Mammary epithelial cell (primary cell): ENCODE measurements at regions of chr6 and their contacts with region 1.

Region 1: DNA sequence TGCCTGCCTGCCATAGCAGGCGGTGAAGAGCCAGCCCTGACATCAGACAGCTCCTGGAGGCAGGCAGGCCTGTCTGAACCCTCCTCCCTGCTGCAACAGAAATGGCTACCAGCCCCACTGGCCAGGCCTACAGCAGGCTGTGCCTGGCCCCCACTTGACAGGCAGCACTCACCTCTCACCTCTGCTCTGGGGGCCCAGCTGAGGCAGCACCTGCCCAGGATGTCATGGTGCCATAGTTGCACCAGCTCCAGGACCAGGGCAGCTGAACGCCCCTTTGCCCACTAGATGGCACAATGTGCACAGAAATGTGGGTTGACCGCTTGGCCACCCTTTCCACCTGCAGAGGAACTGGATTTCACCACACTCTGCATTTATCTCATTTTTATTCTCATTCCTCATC is 30.6 kb downstream of the MRPL14 start:
- DNase-seq: peak; percentile 61
- H3K4me3 ChIP-seq: no peak overlapping the region
- H3K27ac ChIP-seq: no peak overlapping the region
- H3K4me1 ChIP-seq: no peaks in the 10 kb centered on the region
- H3K27me3 ChIP-seq: no peaks in the 10 kb centered on the region
- CTCF ChIP-seq: peak; percentile 85 to 87

Region 2: GRCh38 chr6:43916924-43917877 is 179.4 kb before region 1 on chr6:
- CTCF ChIA-PET with region 1: no interaction called
- dilution Hi-C with region 1: no loop called
- in situ Hi-C with region 1: no loop called
- intact Hi-C with region 1: no loop called
- DNase-seq: no peak
- H3K4me3 ChIP-seq: no peak overlapping the region
- H3K27ac ChIP-seq: no peak overlapping the region
- H3K4me1 ChIP-seq: no peaks in the 10 kb centered on the region
- H3K27me3 ChIP-seq: no peaks in the 10 kb centered on the region
- CTCF ChIP-seq: no peak

Region 3: DNA sequence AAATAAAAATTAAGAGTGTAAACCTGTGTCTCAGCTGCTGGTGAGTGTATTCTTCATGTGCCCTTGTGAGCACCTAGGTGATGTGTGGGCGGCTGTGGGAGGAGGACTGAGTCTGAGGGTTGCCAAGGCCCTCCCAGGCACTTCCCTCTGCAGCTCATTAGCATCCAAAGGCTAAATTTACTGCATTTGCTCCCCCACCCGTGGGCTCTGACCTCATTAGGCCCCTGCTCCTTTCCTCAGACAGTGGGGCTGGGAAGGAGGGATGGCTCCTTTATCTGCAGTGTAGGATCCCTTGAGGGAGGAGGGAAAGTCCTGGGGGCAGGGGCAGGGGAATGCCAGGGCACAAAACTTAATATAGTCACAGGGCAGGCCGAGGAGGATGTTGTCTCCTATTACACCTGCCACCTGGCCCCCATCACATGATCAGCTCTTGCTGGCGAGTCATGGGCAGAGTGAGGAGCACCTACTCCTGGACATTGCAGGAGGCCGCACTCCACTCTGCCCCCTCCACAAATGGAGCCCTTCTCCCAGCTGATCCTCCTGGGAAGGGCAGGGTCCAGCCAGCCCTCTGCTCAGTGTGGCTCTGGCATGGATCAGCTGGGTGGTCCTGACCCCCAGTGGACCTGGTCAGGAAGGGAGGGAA is 102.6 kb before region 1 on chr6:
- CTCF ChIA-PET with region 1: interaction called, 14 read pairs
- dilution Hi-C with region 1: no loop called
- in situ Hi-C with region 1: no loop called
- intact Hi-C with region 1: no loop called
- DNase-seq: no peak
- H3K4me3 ChIP-seq: no peak overlapping the region
- H3K27ac ChIP-seq: no peak overlapping the region
- H3K4me1 ChIP-seq: peaks cover 16% of the 10 kb centered on the region
- H3K27me3 ChIP-seq: no peaks in the 10 kb centered on the region
- CTCF ChIP-seq: no peak

Region 4: GRCh38 chr6:44127186-44128019 is 30.8 kb after region 1 on chr6 and contains the starts of genes MRPL14 and TMEM63B:
- CTCF ChIA-PET with region 1: no interaction called
- dilution Hi-C with region 1: no loop called
- in situ Hi-C with region 1: no loop called
- intact Hi-C with region 1: loop called (anchors 1 kb)
- DNase-seq: peak; percentile 84
- H3K4me3 ChIP-seq: peak within 1 kb of the TSS; percentile 81 to 89 (median 88)
- H3K27ac ChIP-seq: peak within 1 kb of the TSS; percentile 63
- H3K4me1 ChIP-seq: peaks cover 37% of the 10 kb centered on the region
- H3K27me3 ChIP-seq: no peaks in the 10 kb centered on the region
- CTCF ChIP-seq: no peak
- total RNA-seq, gene MRPL14: 57.2 to 82.0 TPM
- total RNA-seq, gene TMEM63B: 121 to 182 TPM

Region 5: DNA sequence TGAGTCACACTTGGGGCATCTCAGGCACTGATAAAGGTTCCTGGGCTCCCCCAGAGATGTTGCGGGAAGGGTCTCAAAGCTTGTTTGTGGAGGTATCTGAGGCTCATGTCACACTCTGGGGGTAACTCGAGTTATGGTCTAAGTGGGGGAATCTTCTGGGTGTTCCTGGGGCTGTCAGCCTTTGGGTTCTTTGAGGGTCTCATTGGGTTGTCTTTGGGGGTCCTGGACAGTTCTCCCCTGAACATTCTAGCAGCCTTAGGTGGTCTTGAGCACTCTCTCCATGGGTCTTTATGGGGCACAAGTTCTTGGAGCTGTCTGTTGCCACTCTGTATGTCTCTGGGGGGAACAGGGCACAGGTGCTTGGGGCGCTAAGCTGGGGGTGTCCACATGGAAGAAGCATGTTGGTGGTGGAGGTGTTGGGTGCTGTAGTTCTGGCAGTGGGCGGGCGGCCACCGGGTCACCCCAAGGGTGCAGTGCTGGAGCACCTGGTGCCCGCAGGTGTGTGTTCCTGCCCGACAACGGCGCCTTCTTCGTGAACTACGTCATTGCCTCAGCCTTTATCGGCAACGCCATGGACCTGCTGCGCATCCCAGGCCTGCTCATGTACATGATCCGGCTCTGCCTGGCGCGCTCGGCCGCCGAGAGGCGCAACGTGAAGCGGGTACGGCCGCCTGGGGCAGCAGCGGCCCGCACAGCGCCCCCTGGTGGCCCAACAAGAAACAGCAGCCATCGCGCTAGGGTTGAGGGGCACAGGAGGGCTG is 54.9 kb after region 1 on chr6:
- CTCF ChIA-PET with region 1: no interaction called
- dilution Hi-C with region 1: loop called (anchors 5 kb)
- in situ Hi-C with region 1: loop called (anchors 10 kb)
- intact Hi-C with region 1: loop called (anchors 1 kb)
- DNase-seq: peak; percentile 48
- H3K4me3 ChIP-seq: no peak overlapping the region
- H3K27ac ChIP-seq: no peak overlapping the region
- H3K4me1 ChIP-seq: no peaks in the 10 kb centered on the region
- H3K27me3 ChIP-seq: no peaks in the 10 kb centered on the region
- CTCF ChIP-seq: peak; percentile 94 to 99

Region 6: GRCh38 chr6:44246663-44247337 is 150.2 kb after region 1 on chr6 and contains the start of gene HSP90AB1:
- CTCF ChIA-PET with region 1: no interaction called
- dilution Hi-C with region 1: no loop called
- in situ Hi-C with region 1: loop called in 1 of 2 experiments (anchors 25 kb)
- intact Hi-C with region 1: no loop called
- DNase-seq: peak; percentile 98
- H3K4me3 ChIP-seq: peak within 1 kb of the TSS; percentile 75 to 89 (median 81)
- H3K27ac ChIP-seq: peak within 1 kb of the TSS; percentile 93
- H3K4me1 ChIP-seq: peaks cover 37% of the 10 kb centered on the region
- H3K27me3 ChIP-seq: no peaks in the 10 kb centered on the region
- CTCF ChIP-seq: no peak
- total RNA-seq, gene HSP90AB1: 872 to 986 TPM